Testis (tissue), 5 donors: ENCODE measurements at regions of chr1 and their contacts with region 1.

Region 1: GRCh38 chr1:92858564-92859399 is 26.9 kb downstream of the RPL5 start:
- DNase-seq: peak; percentile 82
- H3K4me3 ChIP-seq: peak overlapping the region in 1 of 2 donors; percentile 0
- H3K27ac ChIP-seq: no peak overlapping the region
- H3K4me1 ChIP-seq: no peaks in the 10 kb centered on the region
- H3K27me3 ChIP-seq: no peaks in the 10 kb centered on the region
- CTCF ChIP-seq: peak; percentile 93 to 98 (median 97)
- POLR2A ChIP-seq: no peak

Region 2: DNA sequence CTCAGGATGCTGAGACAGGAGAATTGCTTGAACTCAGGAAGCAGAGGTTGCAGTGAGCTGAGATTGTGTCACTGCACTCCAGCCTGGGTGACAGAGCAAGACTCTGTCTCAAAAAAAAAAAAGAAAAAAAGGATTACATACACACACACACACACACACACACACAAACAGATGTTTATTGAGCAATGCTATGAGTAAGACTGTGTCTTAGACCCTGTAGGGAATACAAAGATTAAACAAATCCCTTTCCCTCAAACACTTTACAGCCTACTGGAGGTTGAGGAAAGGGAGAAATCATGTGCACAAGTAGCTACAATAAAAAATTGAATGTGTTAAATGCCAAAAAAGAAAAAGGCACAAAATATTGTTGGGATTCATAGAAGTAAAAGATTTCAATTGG is 501.8 kb before region 1 on chr1:
- intact Hi-C with region 1: no loop called
- DNase-seq: no peak
- H3K4me3 ChIP-seq: no peak overlapping the region
- H3K27ac ChIP-seq: no peak overlapping the region
- H3K4me1 ChIP-seq: no peaks in the 10 kb centered on the region
- H3K27me3 ChIP-seq: no peaks in the 10 kb centered on the region
- CTCF ChIP-seq: no peak
- POLR2A ChIP-seq: no peak

Region 3: GRCh38 chr1:92994105-92994712 is 135.4 kb after region 1 on chr1:
- intact Hi-C with region 1: loop called (anchors 5 kb)
- DNase-seq: peak; percentile 93
- H3K4me3 ChIP-seq: no peak overlapping the region
- H3K27ac ChIP-seq: no peak overlapping the region
- H3K4me1 ChIP-seq: peaks cover 4% of the 10 kb centered on the region
- H3K27me3 ChIP-seq: no peaks in the 10 kb centered on the region
- CTCF ChIP-seq: peak; percentile 91 to 97 (median 94)
- POLR2A ChIP-seq: no peak